Dorsolateral prefrontal cortex (tissue), 120 donors: ENCODE measurements at regions of chr17 and their contacts with region 1.

Region 1: DNA sequence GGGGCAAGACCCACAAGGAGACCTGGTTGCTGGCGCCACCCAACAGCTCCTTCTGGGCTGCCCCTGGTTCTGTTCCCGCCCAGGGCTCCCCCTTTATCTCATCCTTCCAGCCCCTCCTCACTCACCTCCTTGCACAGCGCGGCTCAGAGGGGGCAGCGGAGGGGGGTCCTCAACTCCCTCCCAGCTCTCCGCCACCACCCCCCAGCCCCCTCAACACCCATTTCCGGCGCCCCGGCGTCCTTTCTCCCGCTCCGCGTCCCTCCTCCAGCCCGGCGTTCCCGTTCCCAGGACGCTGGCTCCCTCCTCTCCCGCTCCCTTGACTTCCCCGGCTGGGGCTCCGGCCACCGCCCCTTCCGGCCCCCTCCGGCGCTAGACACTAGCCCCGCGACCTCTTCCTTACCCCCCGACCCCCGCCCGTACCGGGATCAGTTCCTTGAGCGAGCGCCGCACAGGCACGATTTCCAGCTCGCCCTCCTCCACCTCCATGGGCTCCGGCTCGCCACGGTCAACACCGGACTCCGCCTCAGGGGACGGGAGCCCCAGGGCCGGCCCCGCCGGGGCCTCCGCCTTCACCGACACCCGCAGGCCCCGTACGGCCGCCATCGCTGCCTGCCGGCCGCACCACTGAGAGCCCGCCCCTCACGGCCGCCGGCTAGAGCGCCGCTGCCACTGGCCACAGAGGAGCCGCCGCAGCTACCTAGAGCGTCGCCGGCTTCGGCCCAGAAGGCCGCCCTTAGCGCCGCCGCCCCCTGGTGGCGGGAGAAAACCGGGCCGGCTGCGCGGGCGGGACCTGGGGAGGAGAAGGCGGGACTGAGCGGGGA is at the start of gene NCBP3:
- DNase-seq: peak; percentile 76 to 93 (median 88)
- H3K4me3 ChIP-seq: peak within 1 kb of the TSS; percentile 72 to 98 (median 92)
- H3K27ac ChIP-seq: peak within 1 kb of the TSS; percentile 54 to 97 (median 86)
- H3K27me3 ChIP-seq: no peaks in the 10 kb centered on the region
- CTCF ChIP-seq: peak; percentile 79 to 99 (median 94)
- total RNA-seq, gene NCBP3: 27.5 to 72.2 (median 39.5) TPM

Region 2: GRCh38 chr17:3260600-3260999 is 585.2 kb before region 1 on chr17:
- intact Hi-C with region 1: no loop called
- DNase-seq: no peak
- H3K4me3 ChIP-seq: no peak overlapping the region
- H3K27ac ChIP-seq: no peak overlapping the region
- H3K27me3 ChIP-seq: no peaks in the 10 kb centered on the region
- CTCF ChIP-seq: no peak

Region 3: GRCh38 chr17:3723556-3724369 is 122.1 kb before region 1 on chr17 and contains the start of gene HASPIN:
- intact Hi-C with region 1: loop called in 1 of 2 experiments (anchors 5 kb)
- DNase-seq: peak; percentile 72 to 93 (median 82)
- H3K4me3 ChIP-seq: peak within 1 kb of the TSS; percentile 64 to 100 (median 93)
- H3K27ac ChIP-seq: peak within 1 kb of the TSS in 57 of 59 donors; percentile 46 to 95 (median 83)
- H3K27me3 ChIP-seq: no peaks in the 10 kb centered on the region
- CTCF ChIP-seq: peak in 46 of 56 donors; percentile 1 to 69 (median 40)
- total RNA-seq, gene HASPIN: 0.13 to 0.31 (median 0.18) TPM in 26 of 120 experiments, not detected in the others

Region 4: GRCh38 chr17:3944485-3945388 is 98.9 kb after region 1 on chr17:
- intact Hi-C with region 1: no loop called
- DNase-seq: peak in 3 of 10 donors; percentile 29 to 57 (median 30)
- H3K4me3 ChIP-seq: peak overlapping the region in 57 of 59 donors; percentile 12 to 64 (median 42)
- H3K27ac ChIP-seq: no peak overlapping the region
- H3K27me3 ChIP-seq: no peaks in the 10 kb centered on the region
- CTCF ChIP-seq: no peak